H1 (cell line): ENCODE measurements at regions of chr2 and their contacts with region 1.

Region 1: GRCh38 chr2:120594840-120595685 is 140.6 kb upstream of the GLI2 start:
- DNase-seq: no peak
- H3K4me3 ChIP-seq: no peak overlapping the region
- H3K27ac ChIP-seq: no peak overlapping the region
- H3K4me1 ChIP-seq: peaks cover 4 to 21% (median 13%) of the 10 kb centered on the region in 4 experiments
- H3K27me3 ChIP-seq: peaks cover 0 to 18% (median 10%) of the 10 kb centered on the region in 4 experiments; a peak in 5 of 7 replicates
- CTCF ChIP-seq: no peak
- EP300 ChIP-seq: no peak
- POLR2A ChIP-seq: no peak
- RAD21 ChIP-seq: no peak

Region 2: DNA sequence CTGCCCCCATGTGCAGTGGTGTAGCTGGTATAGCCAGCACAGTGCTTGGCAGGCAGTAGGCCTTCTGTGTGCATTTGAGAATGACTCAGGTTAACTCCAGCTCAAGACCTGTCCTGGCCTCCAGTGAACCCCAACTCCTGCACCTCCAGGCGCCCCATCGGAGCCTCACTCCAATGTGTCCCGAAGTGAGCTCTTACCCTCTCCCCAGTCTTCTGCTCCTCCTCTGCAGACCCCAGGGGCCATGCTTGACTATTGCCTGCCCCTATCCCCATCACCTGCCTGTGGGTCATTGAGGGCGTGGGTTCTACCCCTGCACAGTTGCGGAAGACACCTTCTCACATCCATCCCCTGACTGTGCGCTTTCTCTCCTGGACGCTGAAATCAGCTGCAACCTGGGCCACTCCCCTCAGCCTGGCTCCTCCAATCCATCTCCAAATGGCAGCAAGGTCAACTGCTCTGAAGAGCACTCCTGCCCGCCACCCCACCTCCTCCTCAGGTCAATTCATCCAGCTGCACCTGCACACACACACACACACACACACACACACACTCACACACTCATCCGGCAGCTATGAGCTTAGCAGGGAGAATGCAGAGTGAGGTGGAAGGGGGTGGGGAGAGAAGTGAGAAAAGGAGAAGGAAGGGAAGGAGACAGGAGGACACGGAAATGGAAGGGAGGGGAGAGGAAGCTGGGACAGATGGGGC is 10.3 kb after region 1 on chr2:
- CTCF ChIA-PET with region 1: interaction called, 14 read pairs
- POLR2A ChIA-PET with region 1: interaction called, 3 read pairs
- DNase-seq: no peak
- H3K4me3 ChIP-seq: no peak overlapping the region
- H3K27ac ChIP-seq: no peak overlapping the region
- H3K4me1 ChIP-seq: peaks cover 0 to 4% (median 3%) of the 10 kb centered on the region in 4 experiments; a peak in 4 of 7 replicates
- H3K27me3 ChIP-seq: peaks cover 0 to 2% (median 0%) of the 10 kb centered on the region in 4 experiments; a peak in 2 of 7 replicates
- CTCF ChIP-seq: no peak
- EP300 ChIP-seq: no peak
- POLR2A ChIP-seq: no peak
- RAD21 ChIP-seq: no peak

Region 3: GRCh38 chr2:120875431-120875830 is 280.4 kb after region 1 on chr2:
- CTCF ChIA-PET with region 1: no interaction called
- POLR2A ChIA-PET with region 1: no interaction called
- DNase-seq: no peak
- H3K4me3 ChIP-seq: no peak overlapping the region
- H3K27ac ChIP-seq: no peak overlapping the region
- H3K4me1 ChIP-seq: peaks cover 0 to 9% (median 7%) of the 10 kb centered on the region in 4 experiments; a peak in 4 of 7 replicates
- H3K27me3 ChIP-seq: no peaks in the 10 kb centered on the region
- CTCF ChIP-seq: no peak
- EP300 ChIP-seq: no peak
- POLR2A ChIP-seq: no peak
- RAD21 ChIP-seq: no peak

Region 4: DNA sequence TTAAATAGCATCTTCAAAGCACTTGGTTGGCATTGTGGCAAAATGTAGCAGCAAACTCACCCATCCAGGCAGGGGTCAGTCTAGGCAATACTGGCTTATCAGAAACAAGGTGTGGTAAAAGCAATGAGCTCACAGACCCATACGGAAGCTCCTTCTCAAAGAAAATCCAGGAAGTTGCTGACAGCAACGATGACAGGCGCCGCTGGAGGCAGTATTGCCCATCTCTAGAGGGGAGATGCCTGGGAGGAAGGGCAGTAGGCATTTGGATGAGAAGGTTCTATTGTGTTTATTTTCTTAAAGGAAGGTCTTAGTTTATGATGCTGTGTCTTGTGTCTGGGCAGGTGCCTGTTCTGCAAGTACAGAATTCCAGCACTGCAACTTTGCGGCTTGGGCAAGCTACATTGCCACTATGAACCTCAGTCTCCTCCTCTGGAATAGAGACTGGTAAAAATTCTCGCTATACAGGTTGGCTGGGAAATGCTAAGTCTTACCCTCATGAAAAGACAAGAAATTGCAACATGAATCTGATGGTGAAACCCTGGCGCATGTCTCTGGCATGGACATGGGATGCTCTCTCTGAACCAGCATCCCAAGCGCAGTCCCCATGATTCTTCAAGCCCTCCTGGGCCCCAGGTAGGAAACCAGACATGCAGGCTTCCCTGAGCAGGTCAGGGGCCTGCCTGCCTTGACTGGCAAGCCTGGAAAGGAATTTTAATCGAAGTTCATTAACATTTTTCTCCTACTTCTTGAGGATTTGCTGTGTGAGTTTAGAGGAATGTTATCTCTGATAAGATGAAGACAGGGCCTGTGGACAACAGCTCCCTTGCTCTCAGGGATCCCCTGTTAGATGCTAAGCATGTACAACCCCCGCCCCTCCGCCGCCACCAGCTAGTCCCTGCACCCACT is 533.9 kb after region 1 on chr2:
- CTCF ChIA-PET with region 1: no interaction called
- POLR2A ChIA-PET with region 1: no interaction called
- DNase-seq: peak in 1 of 2 experiments; percentile 78
- H3K4me3 ChIP-seq: no peak overlapping the region
- H3K27ac ChIP-seq: no peak overlapping the region
- H3K4me1 ChIP-seq: peaks cover 3 to 26% (median 13%) of the 10 kb centered on the region in 4 experiments
- H3K27me3 ChIP-seq: peaks cover 0 to 6% (median under 1%) of the 10 kb centered on the region in 4 experiments; a peak in 2 of 7 replicates
- CTCF ChIP-seq: peak; percentile 75 to 95 (median 80)
- EP300 ChIP-seq: no peak
- POLR2A ChIP-seq: no peak
- RAD21 ChIP-seq: peak; percentile 82 to 86